Cardiac septum (tissue), 1 donor: ENCODE measurements at regions of chr9 and their contacts with region 1.

Region 1: DNA sequence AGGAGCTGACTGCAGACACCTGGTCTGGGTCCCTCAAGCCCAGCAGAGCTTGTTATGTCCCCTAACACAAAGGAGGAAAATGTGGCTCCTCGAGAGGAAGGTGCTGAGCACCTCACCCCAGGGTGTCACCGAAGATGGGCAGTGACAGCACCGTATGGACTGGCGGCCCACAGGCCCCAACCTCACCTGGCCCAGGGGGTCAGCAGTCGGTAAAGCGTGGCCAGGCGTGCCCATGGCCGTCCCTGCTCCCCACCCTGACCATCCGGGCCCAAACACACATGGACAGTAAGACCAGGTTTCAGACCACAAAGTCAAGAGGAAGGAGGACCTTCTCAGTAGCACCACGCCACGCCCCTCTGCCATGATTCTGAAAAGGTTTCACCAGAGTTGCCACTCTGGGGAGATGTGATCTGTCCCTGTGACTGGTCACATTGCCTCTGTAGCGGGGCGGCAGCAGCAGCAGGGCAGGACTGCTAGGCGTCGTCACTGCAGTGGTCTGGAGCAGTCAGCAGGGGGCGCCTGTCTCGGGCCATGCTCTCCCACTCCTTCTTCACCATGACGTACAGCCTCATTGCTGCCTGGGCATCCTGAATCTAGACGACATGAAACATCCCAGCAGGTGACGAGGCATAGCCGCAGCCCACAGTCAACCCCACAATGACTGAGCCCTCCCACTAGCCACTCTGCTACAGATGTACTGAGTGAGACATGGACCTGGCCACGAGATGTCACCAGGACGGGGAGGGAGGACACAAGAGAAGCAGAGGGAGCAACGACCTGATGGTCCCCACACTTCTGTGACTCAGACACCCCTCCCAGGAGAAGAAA is 11.1 kb downstream of the REXO4 start:
- DNase-seq: peak; percentile 87

Region 2: DNA sequence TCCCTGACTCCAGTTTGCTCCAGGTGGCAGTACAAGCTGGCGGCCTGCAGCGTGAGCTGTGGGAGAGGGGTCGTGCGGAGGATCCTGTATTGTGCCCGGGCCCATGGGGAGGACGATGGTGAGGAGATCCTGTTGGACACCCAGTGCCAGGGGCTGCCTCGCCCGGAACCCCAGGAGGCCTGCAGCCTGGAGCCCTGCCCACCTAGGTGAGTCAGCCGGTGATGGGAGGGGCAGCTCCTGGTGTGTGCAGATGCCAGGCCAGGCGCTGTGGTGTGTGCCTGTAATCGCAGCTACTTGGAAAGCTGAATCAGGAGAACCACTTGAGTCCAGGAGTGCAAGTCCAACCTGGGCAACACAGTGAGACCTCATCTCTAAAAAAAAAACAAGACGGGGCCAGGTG is 43.1 kb after region 1 on chr9:
- intact Hi-C with region 1: no loop called
- DNase-seq: no peak

Region 3: DNA sequence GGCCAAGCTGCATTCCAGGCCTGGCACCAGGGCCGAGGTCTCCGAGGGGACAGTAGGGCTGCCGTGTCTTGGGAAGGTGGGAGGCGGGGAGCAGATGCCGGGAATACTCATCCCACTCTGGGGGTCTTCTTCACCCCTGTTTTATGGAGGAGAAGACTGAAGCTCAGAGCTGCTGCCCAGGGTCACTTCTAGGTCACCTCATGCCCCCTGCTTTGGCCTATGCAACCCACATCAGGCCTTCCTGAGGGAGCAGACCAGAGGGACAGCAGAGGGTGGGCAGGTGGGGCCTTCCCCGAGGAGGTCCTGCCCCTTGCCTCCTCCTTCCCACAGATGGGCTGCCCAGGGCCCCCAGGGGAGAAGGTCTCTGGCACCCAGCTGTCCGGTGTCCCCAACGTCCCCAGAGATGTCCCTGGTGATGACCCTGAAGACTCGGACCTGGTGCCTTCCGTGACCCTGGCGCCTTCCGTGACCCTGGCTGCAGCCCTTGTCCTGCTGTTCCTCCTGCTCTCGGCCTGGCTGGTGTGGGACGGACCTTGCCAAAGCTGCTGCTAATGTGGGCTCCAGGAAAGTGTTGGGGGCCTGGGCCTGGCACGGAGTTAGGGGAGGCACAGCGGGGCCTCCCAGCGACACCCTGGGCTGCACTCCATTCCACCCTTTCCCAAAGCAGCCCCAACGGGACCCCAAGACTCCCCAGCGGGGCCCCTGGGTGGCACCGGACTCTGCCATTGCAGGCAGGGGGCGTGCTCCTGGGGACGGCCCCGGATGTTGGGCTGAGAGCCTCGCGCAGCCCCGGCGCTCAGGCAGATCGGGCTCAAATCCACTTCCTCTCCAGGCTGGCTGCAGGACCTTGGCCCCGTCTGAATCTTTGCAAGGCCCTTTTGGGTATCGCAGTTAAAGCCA is 78.9 kb after region 1 on chr9:
- intact Hi-C with region 1: loop called (anchors 1 kb)
- DNase-seq: no peak

Region 4: DNA sequence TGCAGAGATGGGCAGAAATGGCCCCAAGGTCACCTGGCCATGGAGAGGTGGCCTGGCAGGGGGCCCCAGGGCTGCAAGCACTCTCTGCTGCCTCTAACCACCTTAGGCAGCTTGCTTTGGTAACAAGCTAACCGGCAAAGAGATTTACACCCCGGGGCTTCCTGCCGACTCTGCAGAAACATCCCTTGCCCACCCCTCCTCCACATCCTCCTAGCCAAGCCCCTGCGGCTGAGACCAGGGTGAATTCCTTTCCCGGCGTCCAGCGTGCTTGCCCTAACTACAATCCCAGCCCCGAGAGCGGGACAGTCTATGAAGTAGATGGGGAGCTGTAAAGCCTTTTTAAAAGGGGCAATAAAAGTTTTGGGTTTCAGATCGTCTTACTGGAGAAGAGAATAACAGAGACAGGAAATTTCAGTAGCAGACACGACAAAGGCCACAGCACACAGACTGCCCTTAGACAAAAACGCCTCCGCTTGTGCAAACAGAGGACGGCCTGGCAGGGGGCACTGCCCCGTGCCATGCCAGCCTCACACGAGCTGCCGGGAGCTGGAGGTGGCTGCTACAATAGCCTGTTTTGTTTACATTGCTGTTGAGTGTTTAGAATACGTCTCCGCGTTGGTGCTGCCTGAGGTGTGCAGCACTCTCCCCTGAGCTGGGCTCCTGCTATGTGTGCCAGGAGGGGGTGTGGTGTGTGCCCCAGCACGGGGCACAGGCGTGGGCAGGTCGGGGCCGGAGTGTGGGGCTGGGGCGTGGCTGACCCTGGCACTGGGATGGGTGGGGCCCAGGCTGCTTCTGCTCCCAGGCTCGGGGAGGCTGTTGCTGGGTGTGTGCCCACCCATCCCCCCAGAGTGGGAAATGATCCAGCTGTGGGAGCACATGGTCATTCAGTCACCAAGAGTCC is 102.7 kb after region 1 on chr9:
- intact Hi-C with region 1: no loop called
- DNase-seq: no peak

Region 5: GRCh38 chr9:133726401-133727276 is 319.9 kb after region 1 on chr9:
- intact Hi-C with region 1: loop called (anchors 10 kb)
- DNase-seq: peak; percentile 72